Activated CD8-positive, alpha-beta memory T cell treated with anti-CD3 and anti-CD28 coated beads, Interleukin-2, amount 10 ng/mL, durations not matched to agents 7 days and 5 days (primary cell): ENCODE measurements at regions of chr17 and their contacts with region 1.

Region 1: DNA sequence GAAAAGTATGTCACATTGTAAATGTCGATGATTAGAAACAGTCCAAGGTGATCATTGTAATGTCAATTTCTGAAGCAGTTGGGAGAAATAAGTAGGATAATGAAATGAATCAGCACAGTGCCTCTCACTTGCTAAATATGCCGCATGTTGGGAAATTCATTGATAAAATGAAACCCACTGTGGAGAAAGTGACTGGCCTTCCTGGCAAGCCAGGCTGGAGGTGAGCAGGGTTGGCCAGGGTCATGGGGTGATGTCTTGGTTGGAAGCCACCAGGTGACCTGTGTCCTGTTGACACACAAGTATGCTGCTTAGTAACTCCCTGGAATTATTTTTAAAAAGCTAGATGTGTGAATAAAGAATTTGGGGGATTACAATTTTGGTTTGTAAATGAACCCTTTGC is 14.9 kb upstream of the WNT9B start:
- DNase-seq: no peak
- ATAC-seq: no peak
- H3K4me3 Mint-ChIP-seq: no peak overlapping the region
- H3K27ac Mint-ChIP-seq: no peak overlapping the region
- H3K4me1 Mint-ChIP-seq: peaks cover 9% of the 10 kb centered on the region
- H3K27me3 Mint-ChIP-seq: peaks cover 28% of the 10 kb centered on the region

Region 2: DNA sequence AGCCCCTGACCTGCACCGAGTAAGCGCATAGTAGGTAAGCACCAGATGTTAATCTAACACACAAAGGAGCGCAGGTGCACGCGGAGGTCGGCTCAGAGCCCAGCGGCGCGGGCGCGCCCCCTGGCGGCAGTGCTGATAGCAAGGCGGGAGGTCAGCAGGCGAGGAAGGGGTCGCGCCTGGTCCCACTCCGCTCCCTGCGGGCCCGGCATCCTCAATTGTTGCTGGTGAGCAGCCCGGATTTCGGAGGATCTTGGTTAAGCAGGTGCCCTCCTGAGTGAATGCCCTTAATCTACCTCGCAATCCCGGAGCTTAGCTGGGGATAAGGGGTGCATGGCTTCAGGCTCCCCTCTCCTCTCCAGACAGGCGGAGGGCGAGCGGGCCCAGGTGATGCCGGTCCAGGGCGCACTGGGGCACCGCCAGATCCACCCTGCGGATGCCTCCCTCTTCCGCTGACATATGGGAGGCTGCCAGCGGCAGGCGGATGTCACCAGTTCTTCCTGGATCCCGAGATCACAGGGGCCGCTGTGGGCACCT is 14.0 kb before region 1 on chr17:
- CTCF ChIA-PET with region 1: interaction called, 18 read pairs
- DNase-seq: peak; percentile 59
- ATAC-seq: no peak
- H3K4me3 Mint-ChIP-seq: no peak overlapping the region
- H3K27ac Mint-ChIP-seq: no peak overlapping the region
- H3K4me1 Mint-ChIP-seq: peaks cover 7% of the 10 kb centered on the region
- H3K27me3 Mint-ChIP-seq: peaks cover 53% of the 10 kb centered on the region